Pancreas (tissue), 10 donors: ENCODE measurements at regions of chr16 and their contacts with region 1.

Region 1: DNA sequence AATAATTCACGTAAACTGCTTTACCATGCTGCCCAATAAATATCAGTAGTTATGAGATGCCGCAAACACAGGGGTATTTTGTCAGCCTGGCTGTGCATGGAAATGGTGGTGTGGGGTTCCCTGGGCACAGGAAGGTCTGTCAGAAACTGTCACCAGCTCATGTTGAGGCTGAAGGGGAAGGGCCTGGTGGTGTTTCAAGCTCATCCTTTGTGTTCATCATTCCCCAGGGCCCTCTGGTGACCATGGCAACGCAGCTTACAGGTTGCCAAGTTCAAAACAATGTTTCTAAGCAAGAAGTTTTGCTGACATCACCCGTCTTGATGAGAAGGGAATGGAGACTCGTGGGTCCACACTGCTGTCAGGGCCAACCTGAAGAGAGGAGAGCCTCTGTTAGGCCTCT is 348.9 kb upstream of the C16orf82 start:
- DNase-seq: no peak
- ATAC-seq: no peak
- H3K4me3 ChIP-seq: no peak overlapping the region
- H3K27ac ChIP-seq: no peak overlapping the region
- H3K4me1 ChIP-seq: no peaks in the 10 kb centered on the region
- H3K27me3 ChIP-seq: no peaks in the 10 kb centered on the region
- CTCF ChIP-seq: no peak

Region 2: DNA sequence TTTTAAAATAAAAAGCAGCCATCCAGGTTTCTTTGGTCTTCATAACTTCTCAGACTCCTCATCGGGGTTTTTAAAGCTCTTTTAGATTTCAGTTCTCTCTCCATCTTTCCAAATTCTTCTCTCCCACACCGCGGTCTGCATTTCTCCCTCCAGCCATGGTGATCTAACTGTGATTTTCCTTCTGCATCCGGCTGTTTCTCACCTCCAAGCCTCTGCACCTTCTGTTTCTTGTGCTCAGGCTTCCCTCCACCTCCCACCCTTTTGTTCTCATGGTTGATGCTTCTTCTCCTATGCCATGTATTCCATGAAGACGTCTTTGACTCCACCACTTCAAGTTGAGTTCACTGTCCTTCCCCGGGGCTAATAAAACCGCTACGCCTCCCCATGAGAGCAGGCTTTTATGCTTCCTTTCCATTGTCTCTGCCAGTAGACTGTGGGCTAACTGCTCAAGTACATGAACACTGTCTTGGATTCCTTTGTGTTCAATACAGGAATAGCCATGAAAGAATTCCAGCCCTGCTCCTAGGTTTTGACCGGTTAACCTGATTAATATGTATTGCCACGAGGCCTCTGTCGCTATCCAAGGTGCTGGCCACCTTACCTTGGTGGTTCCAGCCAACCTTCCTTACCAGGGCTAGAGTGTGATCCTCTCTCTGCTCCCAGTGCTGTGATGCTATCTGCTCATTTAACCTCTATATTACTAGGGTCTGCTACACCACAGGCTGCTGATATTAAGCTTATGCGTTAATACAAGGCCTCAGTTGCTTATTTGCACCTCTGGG is 401.0 kb before region 1 on chr16:
- intact Hi-C with region 1: no loop called
- DNase-seq: no peak
- ATAC-seq: no peak
- H3K4me3 ChIP-seq: no peak overlapping the region
- H3K27ac ChIP-seq: no peak overlapping the region
- H3K4me1 ChIP-seq: no peaks in the 10 kb centered on the region
- H3K27me3 ChIP-seq: no peaks in the 10 kb centered on the region
- CTCF ChIP-seq: no peak

Region 3: DNA sequence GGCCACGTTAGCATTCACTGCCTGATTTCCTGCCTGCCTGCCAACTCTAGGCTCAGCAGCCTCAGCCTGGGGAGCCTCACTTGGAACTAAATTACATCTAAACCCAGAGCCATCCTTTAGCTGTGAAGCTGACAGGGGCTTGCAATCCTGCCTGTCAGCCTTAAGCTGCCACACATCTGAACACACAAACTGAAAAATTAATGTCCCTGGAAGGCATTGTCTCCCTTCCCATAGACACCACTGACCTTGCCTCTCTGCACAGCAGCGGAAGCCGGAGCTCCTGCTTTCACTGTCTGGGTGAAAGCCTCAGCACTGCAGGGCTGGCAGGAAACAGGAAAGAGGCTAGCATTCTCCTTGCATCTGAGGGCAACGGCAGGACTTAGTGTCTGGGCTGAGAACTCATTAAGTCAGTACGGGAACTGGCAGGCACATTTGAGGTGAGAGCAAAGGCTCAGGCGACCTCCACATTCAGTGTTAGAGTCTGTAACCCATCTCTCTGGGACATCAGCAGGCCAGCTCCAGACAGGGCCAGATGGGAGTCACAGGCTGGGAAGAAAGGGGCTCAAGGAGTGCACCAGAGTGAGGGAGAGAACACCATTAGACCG is 103.5 kb before region 1 on chr16:
- intact Hi-C with region 1: no loop called
- DNase-seq: no peak
- ATAC-seq: no peak
- H3K4me3 ChIP-seq: no peak overlapping the region
- H3K27ac ChIP-seq: no peak overlapping the region
- H3K4me1 ChIP-seq: no peaks in the 10 kb centered on the region
- H3K27me3 ChIP-seq: no peaks in the 10 kb centered on the region
- CTCF ChIP-seq: no peak

Region 4: GRCh38 chr16:26772503-26772902 is 54.7 kb after region 1 on chr16:
- intact Hi-C with region 1: loop called in 1 of 3 experiments (anchors 10 kb)
- DNase-seq: no peak
- ATAC-seq: no peak
- H3K4me3 ChIP-seq: no peak overlapping the region
- H3K27ac ChIP-seq: no peak overlapping the region
- H3K4me1 ChIP-seq: no peaks in the 10 kb centered on the region
- H3K27me3 ChIP-seq: peaks cover 0 to 10% (median 0%) of the 10 kb centered on the region in 4 donors
- CTCF ChIP-seq: no peak